Calu3 (cell line): ENCODE measurements at regions of chr5 and their contacts with region 1.

Region 1: DNA sequence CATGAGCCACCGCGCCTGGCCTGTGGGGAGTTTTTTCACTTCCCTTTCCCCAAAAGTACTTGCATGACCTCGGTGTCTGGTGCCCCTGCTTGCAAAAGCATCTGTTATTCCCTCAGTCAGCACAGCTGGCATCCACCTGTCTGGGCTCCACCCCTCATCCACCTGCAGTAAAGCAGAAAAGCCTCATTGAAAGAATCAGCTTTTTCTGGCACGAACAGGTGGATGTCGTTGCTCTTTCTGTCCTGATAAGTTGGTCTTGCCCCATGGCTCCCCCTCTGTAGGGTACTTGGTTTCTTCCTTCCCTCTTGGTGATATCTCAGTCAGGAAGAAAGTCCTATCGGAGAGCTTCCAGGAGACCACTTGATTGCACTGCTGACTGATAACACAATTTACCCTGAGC is 37.4 kb downstream of the WWC1 start:
- DNase-seq: peak; percentile 78
- H3K4me3 Mint-ChIP-seq: peak overlapping the region; percentile 45
- H3K27ac Mint-ChIP-seq: peak overlapping the region; percentile 28
- H3K4me1 Mint-ChIP-seq: peaks cover 95% of the 10 kb centered on the region
- H3K27me3 Mint-ChIP-seq: no peaks in the 10 kb centered on the region
- CTCF ChIP-seq: no peak

Region 2: GRCh38 chr5:168301593-168302388 is 27.0 kb before region 1 on chr5:
- CTCF ChIA-PET with region 1: interaction called, 13 read pairs
- intact Hi-C with region 1: no loop called
- DNase-seq: peak; percentile 90
- H3K4me3 Mint-ChIP-seq: peak overlapping the region; percentile 71
- H3K27ac Mint-ChIP-seq: peak overlapping the region; percentile 97
- H3K4me1 Mint-ChIP-seq: peaks cover 90% of the 10 kb centered on the region
- H3K27me3 Mint-ChIP-seq: no peaks in the 10 kb centered on the region
- CTCF ChIP-seq: no peak

Region 3: DNA sequence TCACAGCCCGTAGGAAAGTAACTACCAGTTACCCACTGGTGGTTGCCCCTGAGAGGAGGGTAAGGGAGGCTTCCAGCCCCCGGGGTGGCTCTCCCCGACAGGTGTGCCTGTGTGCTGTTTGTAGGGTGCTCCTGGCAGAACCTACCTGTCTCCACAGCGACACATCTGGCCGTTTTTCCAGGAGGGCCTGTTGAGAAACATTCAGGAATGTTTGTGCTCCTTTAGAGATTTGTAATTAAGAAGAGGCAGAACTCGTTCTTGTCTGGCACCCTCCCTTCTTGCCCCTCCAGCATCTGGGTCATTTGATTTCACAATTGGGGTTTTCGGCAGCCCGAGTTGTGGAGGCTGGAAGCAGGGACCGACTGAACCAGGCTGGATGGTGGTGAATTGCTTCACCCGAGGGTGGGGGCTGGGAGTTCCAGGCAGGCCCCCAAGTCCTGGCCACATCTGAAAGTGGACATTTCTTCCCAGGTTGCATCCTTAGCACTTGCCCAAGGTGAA is 36.8 kb after region 1 on chr5:
- CTCF ChIA-PET with region 1: interaction called, 12 read pairs
- intact Hi-C with region 1: loop called (anchors 2 kb)
- DNase-seq: peak; percentile 82
- H3K4me3 Mint-ChIP-seq: peak overlapping the region; percentile 49
- H3K27ac Mint-ChIP-seq: peak overlapping the region; percentile 72
- H3K4me1 Mint-ChIP-seq: peaks cover 66% of the 10 kb centered on the region
- H3K27me3 Mint-ChIP-seq: no peaks in the 10 kb centered on the region
- CTCF ChIP-seq: peak; percentile 50

Region 4: DNA sequence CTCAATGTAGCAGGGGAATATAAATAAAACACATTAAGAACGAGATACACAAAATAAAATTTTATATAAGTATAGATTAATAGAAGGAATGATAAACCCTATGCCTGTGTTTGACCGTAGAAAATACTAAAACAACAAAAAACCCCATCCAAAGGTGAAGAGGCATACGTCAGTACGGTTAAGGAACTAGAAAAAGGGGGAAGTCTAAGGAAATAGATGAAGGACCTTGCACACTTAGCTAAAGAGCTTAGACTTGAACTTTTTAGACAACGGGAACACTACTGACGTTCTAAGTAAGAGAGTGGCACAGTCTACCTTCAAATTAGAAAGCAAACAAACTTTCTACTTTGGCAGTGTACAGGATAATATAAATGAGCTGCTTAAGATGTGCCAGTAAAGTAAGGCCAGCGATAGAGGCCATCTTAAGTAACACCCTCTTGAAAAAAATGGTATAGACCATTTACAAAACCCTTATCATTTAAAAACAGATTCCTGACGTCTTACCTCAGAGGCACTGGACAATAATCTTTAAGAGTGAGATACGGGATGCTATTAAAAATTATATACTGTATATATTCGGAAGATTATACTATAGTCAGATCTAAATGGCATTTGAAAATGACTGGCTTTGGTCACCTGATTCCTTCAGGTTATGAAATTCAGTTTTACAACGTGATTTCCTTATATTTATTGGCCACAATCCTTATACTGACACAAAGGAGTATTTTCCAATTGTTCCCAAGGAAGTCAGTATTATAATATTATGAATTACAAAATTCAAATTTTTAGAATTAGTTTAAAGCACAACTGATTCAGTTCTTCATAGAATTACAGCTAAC is 241.9 kb after region 1 on chr5:
- CTCF ChIA-PET with region 1: no interaction called
- intact Hi-C with region 1: no loop called
- DNase-seq: no peak
- H3K4me3 Mint-ChIP-seq: no peak overlapping the region
- H3K27ac Mint-ChIP-seq: no peak overlapping the region
- H3K4me1 Mint-ChIP-seq: peaks cover 15% of the 10 kb centered on the region
- H3K27me3 Mint-ChIP-seq: no peaks in the 10 kb centered on the region
- CTCF ChIP-seq: no peak